B cell (primary cell): ENCODE measurements at regions of chr14 and their contacts with region 1.

Region 1: GRCh38 chr14:95774265-95775160 is 60.6 kb upstream of the TCL1A start:
- DNase-seq: peak; percentile 78
- ATAC-seq: peak; percentile 68
- H3K4me3 ChIP-seq: no peak overlapping the region
- H3K4me3 Mint-ChIP-seq: no peak overlapping the region
- H3K27ac ChIP-seq: no peak overlapping the region
- H3K27ac Mint-ChIP-seq: no peak overlapping the region
- H3K4me1 ChIP-seq: peaks cover 7 to 16% of the 10 kb centered on the region in 2 donors
- H3K4me1 Mint-ChIP-seq: peaks cover 24% of the 10 kb centered on the region
- H3K27me3 ChIP-seq: no peaks in the 10 kb centered on the region
- H3K27me3 Mint-ChIP-seq: peaks cover 10% of the 10 kb centered on the region
- CTCF ChIP-seq: peak; percentile 95

Region 2: DNA sequence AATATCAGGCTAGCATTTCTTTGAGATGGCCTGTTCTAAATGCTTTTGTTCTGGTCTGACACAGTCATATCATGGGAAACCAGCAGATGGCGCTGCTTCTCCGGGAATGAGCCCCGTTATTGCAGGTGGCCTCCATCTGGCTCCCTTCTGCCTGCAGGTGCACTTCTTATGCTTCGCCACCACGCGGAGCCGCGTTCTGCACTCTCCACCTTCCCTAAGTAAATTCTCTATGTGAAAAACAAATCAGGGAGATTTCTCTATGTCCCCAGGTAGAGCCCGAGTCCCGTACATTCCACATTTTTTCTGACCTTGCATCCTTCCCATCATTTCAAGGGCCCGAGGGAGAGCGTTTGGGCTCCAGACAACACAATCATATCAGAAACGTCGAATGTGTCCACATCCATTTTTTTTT is 213.5 kb before region 1 on chr14:
- CTCF ChIA-PET with region 1: interaction called, 131 read pairs
- POLR2A ChIA-PET with region 1: no interaction called
- intact Hi-C with region 1: loop called (anchors 1 kb)
- DNase-seq: peak; percentile 91
- ATAC-seq: peak; percentile 97
- H3K4me3 ChIP-seq: no peak overlapping the region
- H3K4me3 Mint-ChIP-seq: no peak overlapping the region
- H3K27ac ChIP-seq: no peak overlapping the region
- H3K27ac Mint-ChIP-seq: peak overlapping the region; percentile 4
- H3K4me1 ChIP-seq: peaks cover 0 to 3% of the 10 kb centered on the region in 2 donors
- H3K4me1 Mint-ChIP-seq: peaks cover 4% of the 10 kb centered on the region
- H3K27me3 ChIP-seq: peaks cover 0 to 14% (median 6%) of the 10 kb centered on the region in 4 experiments
- H3K27me3 Mint-ChIP-seq: peaks cover 23% of the 10 kb centered on the region
- CTCF ChIP-seq: peak; percentile 99

Region 3: GRCh38 chr14:95662376-95663186 is 111.9 kb before region 1 on chr14:
- CTCF ChIA-PET with region 1: interaction called, 12 read pairs
- POLR2A ChIA-PET with region 1: no interaction called
- intact Hi-C with region 1: no loop called
- DNase-seq: peak; percentile 62
- ATAC-seq: peak; percentile 16
- H3K4me3 ChIP-seq: peak overlapping the region in 1 of 5 experiments; percentile 33
- H3K4me3 Mint-ChIP-seq: peak overlapping the region; percentile 56
- H3K27ac ChIP-seq: peak overlapping the region; percentile 58 to 78
- H3K27ac Mint-ChIP-seq: peak overlapping the region; percentile 97
- H3K4me1 ChIP-seq: peaks cover 72 to 83% of the 10 kb centered on the region in 2 donors
- H3K4me1 Mint-ChIP-seq: peaks cover 87% of the 10 kb centered on the region
- H3K27me3 ChIP-seq: no peaks in the 10 kb centered on the region
- H3K27me3 Mint-ChIP-seq: peaks cover 31% of the 10 kb centered on the region
- CTCF ChIP-seq: no peak

Region 4: GRCh38 chr14:95713596-95714371 is 60.7 kb before region 1 on chr14 and contains the start of gene TCL1A:
- CTCF ChIA-PET with region 1: interaction called, 22 read pairs
- POLR2A ChIA-PET with region 1: interaction called, 3 read pairs
- intact Hi-C with region 1: loop called (anchors 5 kb)
- DNase-seq: peak; percentile 78
- ATAC-seq: peak; percentile 90
- H3K4me3 ChIP-seq: peak within 1 kb of the TSS; percentile 70 to 96 (median 90)
- H3K4me3 Mint-ChIP-seq: peak within 1 kb of the TSS; percentile 95
- H3K27ac ChIP-seq: peak within 1 kb of the TSS; percentile 76 to 81
- H3K27ac Mint-ChIP-seq: peak within 1 kb of the TSS; percentile 96
- H3K4me1 ChIP-seq: peaks cover 28 to 59% of the 10 kb centered on the region in 2 donors
- H3K4me1 Mint-ChIP-seq: peaks cover 58% of the 10 kb centered on the region
- H3K27me3 ChIP-seq: peaks cover 0 to 5% (median 3%) of the 10 kb centered on the region in 4 experiments
- H3K27me3 Mint-ChIP-seq: peaks cover 29% of the 10 kb centered on the region
- CTCF ChIP-seq: peak; percentile 33
- total RNA-seq, gene TCL1A: 272 and 275 TPM in 2 replicates

Region 5: GRCh38 chr14:95759941-95760340 is 14.6 kb before region 1 on chr14:
- CTCF ChIA-PET with region 1: interaction called, 16 read pairs
- POLR2A ChIA-PET with region 1: no interaction called
- intact Hi-C with region 1: no loop called
- DNase-seq: no peak
- ATAC-seq: no peak
- H3K4me3 ChIP-seq: no peak overlapping the region
- H3K4me3 Mint-ChIP-seq: no peak overlapping the region
- H3K27ac ChIP-seq: no peak overlapping the region
- H3K27ac Mint-ChIP-seq: no peak overlapping the region
- H3K4me1 ChIP-seq: no peaks in the 10 kb centered on the region
- H3K4me1 Mint-ChIP-seq: no peaks in the 10 kb centered on the region
- H3K27me3 ChIP-seq: no peaks in the 10 kb centered on the region
- H3K27me3 Mint-ChIP-seq: peaks cover 18% of the 10 kb centered on the region
- CTCF ChIP-seq: no peak